ENCODE measurements at regions of chr10 and their contacts with region 1.

Region 1: GRCh38 chr10:125160856-125161706 is 718 bp upstream of the CTBP2 start:
- DNase-seq: peak; percentile 84 to 91
- ATAC-seq: peak; percentile 75
- H3K4me3 ChIP-seq: peak overlapping the region; percentile 83 to 99
- H3K27ac ChIP-seq: peak overlapping the region; percentile 51 to 95
- H3K4me1 ChIP-seq: peaks cover 0 to 9% of the 10 kb centered on the region in 2 donors
- H3K27me3 ChIP-seq: no peaks in the 10 kb centered on the region

Region 2: DNA sequence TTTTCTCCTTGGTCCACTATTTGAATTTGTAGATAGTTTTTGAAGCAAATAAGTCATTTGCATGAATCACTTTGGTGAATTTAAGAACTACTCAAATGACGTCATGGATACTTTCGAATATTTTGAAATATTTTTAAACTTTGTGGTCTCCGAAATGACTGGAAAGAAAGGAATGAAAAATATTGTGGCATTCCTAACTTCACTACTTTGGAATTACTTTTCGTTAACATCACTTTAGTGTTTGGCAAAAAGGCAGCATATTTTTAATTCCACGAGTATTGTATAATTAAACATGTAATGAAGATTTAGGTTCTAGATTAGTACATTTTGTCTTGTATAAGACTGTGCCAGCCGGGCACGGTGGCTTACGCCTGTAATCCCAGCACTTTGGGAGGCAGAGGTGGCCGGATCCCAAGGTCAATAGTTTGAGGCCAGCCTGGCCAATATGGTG is 254.5 kb before region 1 on chr10:
- intact Hi-C with region 1: loop called in 1 of 2 experiments (anchors 10 kb)
- DNase-seq: peak; percentile 69 to 88
- ATAC-seq: no peak
- H3K4me3 ChIP-seq: no peak overlapping the region
- H3K27ac ChIP-seq: no peak overlapping the region
- H3K4me1 ChIP-seq: peaks cover 0 to 1% of the 10 kb centered on the region in 2 donors
- H3K27me3 ChIP-seq: no peaks in the 10 kb centered on the region

Region 3: DNA sequence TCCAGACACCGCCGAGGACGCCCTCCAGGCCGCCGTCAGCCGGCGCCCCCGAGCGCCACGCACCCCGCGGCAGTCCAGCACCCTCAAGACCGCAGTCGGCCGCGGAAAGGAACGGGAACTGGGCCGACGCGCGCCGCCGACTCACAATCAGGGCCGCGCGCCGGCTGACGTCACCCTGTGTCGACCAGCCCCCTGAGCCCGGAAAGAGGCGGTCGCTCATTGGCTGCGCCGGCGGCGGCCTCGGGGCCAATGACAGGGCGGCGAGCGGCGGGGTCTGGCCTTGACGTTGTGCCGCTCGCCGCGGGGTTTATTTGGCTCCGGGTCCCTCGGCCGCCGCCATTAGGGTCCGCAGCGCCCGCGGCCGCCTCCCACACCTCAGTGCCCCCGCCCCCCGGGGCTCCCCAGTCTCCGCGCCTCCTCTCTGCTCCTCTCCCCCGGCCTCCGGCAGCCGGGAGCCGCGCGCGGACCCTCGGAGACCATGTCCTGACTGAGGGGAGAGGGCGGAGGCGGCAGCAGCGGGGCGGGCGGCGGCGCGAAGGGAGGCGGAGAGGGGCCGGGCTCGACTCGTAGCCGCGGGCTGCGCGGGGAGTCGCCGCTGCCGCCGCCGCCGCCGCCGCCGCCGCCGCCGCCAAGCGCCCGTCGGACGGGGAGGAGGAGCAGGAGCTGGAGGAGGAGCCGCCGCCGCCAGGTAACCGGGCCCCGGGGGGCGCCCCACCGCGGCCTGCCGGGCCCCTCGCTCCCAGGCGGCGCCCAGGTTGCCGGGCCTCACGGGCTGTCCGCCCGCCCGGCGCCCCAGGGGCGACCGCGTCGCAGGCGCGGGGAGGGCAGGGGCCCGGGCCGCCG is 244.3 kb before region 1 on chr10:
- intact Hi-C with region 1: loop called in 1 of 2 experiments (anchors 5 kb)
- DNase-seq: peak; percentile 99 to 100
- ATAC-seq: peak; percentile 99
- H3K4me3 ChIP-seq: peak overlapping the region; percentile 92 to 94
- H3K27ac ChIP-seq: peak overlapping the region; percentile 90 to 99
- H3K4me1 ChIP-seq: peaks cover 2 to 7% of the 10 kb centered on the region in 2 donors
- H3K27me3 ChIP-seq: no peaks in the 10 kb centered on the region

Region 4: GRCh38 chr10:125084191-125084613 is 76.9 kb before region 1 on chr10:
- intact Hi-C with region 1: loop called (anchors 2 to 5 kb)
- DNase-seq: peak; percentile 82 to 89
- ATAC-seq: peak; percentile 88
- H3K4me3 ChIP-seq: no peak overlapping the region
- H3K27ac ChIP-seq: peak overlapping the region; percentile 85 to 91
- H3K4me1 ChIP-seq: peaks cover 0 to 7% of the 10 kb centered on the region in 2 donors
- H3K27me3 ChIP-seq: no peaks in the 10 kb centered on the region

Measured in aorta (tissue), 5 donors.